ENCODE measurements at regions of chr1 and their contacts with region 1.

Region 1: GRCh38 chr1:42146626-42147320 is 6.4 kb upstream of the GUCA2B start:
- DNase-seq: peak; percentile 56
- H3K4me3 Mint-ChIP-seq: no peak overlapping the region
- H3K27ac Mint-ChIP-seq: no peak overlapping the region
- H3K4me1 Mint-ChIP-seq: no peaks in the 10 kb centered on the region
- H3K27me3 Mint-ChIP-seq: no peaks in the 10 kb centered on the region

Region 2: GRCh38 chr1:42206170-42206569 is 59.4 kb after region 1 on chr1:
- intact Hi-C with region 1: no loop called
- DNase-seq: no peak
- H3K4me3 Mint-ChIP-seq: no peak overlapping the region
- H3K27ac Mint-ChIP-seq: no peak overlapping the region
- H3K4me1 Mint-ChIP-seq: no peaks in the 10 kb centered on the region
- H3K27me3 Mint-ChIP-seq: no peaks in the 10 kb centered on the region

Region 3: DNA sequence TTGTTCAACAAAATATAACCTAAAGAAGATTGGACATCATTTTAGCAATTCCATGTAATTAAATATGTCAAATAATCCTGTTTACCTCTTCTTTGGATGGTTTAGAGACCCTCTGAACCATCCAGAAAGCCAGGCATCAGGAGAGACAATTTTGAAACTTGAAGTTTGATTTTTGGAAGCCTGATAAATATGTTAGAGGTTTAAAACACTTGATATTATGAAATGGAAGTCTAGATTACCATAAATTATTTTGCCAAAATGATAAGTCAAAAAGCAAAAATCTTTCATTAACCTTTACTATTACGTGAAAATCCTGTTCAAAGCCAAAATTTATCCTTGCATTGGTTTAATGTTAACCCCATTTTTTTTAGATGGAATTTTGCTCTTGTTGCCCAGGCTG is 359.8 kb after region 1 on chr1:
- intact Hi-C with region 1: no loop called
- DNase-seq: no peak
- H3K4me3 Mint-ChIP-seq: no peak overlapping the region
- H3K27ac Mint-ChIP-seq: no peak overlapping the region
- H3K4me1 Mint-ChIP-seq: no peaks in the 10 kb centered on the region
- H3K27me3 Mint-ChIP-seq: no peaks in the 10 kb centered on the region

Region 4: GRCh38 chr1:42747125-42747524 is 600.4 kb after region 1 on chr1:
- intact Hi-C with region 1: loop called (anchors 5 kb)
- DNase-seq: no peak
- H3K4me3 Mint-ChIP-seq: no peak overlapping the region
- H3K27ac Mint-ChIP-seq: no peak overlapping the region
- H3K4me1 Mint-ChIP-seq: no peaks in the 10 kb centered on the region
- H3K27me3 Mint-ChIP-seq: no peaks in the 10 kb centered on the region